WTC11 (cell line): ENCODE measurements at regions of chr5 and their contacts with region 1.

Region 1: GRCh38 chr5:113824307-113824706 is 310.8 kb downstream of the YTHDC2 start:
- DNase-seq: no peak
- ATAC-seq: peak; percentile 88
- H3K4me3 Mint-ChIP-seq: no peak overlapping the region
- H3K27ac Mint-ChIP-seq: no peak overlapping the region
- H3K4me1 Mint-ChIP-seq: peaks cover 5% of the 10 kb centered on the region; the same call in 1 of the 2 replicates
- H3K27me3 Mint-ChIP-seq: no peaks in the 10 kb centered on the region
- CTCF ChIP-seq: no peak

Region 2: GRCh38 chr5:113806250-113806649 is 18.1 kb before region 1 on chr5:
- CTCF ChIA-PET with region 1: interaction called, 14 read pairs
- POLR2A ChIA-PET with region 1: no interaction called
- DNase-seq: no peak
- ATAC-seq: peak; percentile 82
- H3K4me3 Mint-ChIP-seq: no peak overlapping the region
- H3K27ac Mint-ChIP-seq: no peak overlapping the region
- H3K4me1 Mint-ChIP-seq: peaks cover 9% of the 10 kb centered on the region
- H3K27me3 Mint-ChIP-seq: no peaks in the 10 kb centered on the region
- CTCF ChIP-seq: no peak